ENCODE measurements at regions of chr22 and their contacts with region 1.

Region 1: DNA sequence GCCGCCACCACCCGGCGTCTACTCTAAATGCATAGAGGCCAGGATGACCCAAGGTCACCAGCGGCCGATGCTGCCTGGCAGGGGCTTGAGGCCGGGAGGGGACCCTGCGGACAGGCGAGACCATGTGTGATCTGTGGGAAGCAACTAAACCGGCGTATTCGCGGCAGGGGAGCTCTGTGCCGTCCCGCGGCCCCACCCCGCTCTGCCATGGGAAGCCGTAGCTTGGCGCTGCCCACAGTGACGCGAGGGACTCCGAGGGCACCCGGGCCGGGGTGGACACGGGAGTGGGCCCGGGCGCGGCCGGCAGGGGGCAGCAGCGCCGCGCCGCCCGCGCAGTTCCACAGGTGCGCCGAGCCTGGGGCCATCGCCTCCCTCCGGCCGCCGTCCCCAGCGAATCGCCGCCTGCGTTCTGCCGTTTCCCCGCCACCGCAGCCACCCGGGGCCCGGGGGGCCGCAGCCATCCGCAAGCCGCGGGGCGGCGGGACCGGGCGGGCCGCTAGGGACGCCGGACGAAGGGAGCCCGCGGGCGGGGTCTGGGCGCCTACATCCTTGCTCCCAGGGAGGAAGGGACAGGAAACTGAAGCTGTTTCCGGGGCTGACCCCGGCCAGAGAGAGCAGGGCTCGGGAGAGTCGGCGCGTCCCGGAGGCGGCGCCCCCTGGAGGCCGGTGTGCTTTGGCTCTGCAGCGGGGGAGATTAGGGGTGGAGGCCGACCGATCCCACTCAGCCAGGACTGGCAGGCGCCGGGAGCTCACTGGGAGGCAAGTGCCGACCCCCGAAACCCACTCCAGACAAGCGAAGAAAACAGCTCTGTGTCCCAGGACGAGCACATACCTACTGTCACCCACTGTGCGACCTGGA is 12.5 kb upstream of the HDHD5 start:
- DNase-seq: peak; percentile 89
- H3K4me3 ChIP-seq: peak overlapping the region; percentile 13 to 53 (median 46)
- H3K27ac ChIP-seq: peak overlapping the region; percentile 84
- H3K4me1 ChIP-seq: peaks cover 2% of the 10 kb centered on the region
- H3K27me3 ChIP-seq: no peaks in the 10 kb centered on the region
- CTCF ChIP-seq: peak; percentile 68 to 95
- POLR2A ChIP-seq: no peak

Region 2: DNA sequence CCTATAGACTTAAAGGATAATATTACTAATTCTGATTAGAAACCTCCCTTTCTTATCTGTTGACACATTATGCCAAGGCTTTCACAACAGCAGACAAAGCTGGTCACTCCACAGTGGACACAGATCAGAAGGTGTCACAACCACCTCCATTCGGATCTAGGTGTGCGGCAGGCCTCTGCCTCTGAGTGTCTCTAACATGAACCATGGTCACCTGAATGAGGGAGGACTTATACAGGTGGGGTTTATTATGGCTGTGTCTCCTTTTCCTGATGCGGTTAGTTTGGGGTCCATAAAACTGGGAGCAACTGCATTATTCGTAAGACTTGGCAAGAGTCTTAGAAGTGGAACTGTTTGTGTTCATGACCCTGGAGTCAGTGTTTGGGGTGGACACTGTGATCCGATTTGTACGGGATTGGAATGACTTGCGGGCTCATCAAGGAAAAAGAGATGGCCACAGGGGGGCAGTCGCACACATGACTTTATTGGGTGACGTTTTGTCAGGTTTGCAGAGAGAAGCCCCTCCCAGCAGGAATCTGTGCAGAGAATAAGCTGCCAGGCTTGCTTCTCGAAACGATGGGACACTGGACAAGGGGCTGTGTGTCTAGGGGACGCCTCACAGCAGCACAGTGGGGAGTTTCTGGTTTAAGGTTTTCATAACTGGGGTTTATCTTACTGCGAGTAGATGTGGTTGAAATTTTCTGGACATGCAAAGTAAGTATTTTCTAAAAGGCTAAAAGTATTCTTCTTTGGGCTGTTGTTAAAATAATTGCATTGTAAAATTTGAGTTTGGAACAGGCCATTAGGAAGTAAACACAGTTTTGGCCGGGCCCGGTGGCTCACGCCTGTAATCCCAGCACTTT is 254.2 kb before region 1 on chr22:
- CTCF ChIA-PET with region 1: interaction called, 4 read pairs
- POLR2A ChIA-PET with region 1: no interaction called
- dilution Hi-C with region 1: no loop called
- intact Hi-C with region 1: loop called (anchors 1 kb)
- DNase-seq: peak; percentile 70
- H3K4me3 ChIP-seq: no peak overlapping the region
- H3K27ac ChIP-seq: no peak overlapping the region
- H3K4me1 ChIP-seq: no peaks in the 10 kb centered on the region
- H3K27me3 ChIP-seq: peaks cover 0 to 2% of the 10 kb centered on the region in 2 experiments
- CTCF ChIP-seq: peak; percentile 59 to 64
- POLR2A ChIP-seq: no peak

Region 3: DNA sequence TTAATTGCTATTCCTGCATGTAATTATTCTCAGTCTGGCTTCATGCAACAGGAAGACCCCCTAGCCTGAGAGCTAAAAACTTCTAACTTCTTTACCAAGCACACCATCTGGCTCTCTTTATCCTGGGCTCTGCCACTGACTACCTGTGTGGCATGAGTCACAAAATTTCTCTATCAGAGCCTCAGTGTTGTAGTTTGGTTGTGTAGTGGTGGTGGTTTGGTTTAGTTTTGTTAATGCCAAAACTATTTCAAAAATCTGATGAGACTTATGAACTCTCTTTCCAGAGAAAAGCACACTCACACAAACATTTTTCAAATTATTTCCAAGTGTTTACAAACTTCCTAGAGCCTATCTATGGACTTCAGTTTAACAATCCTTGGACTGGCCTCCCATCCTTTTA is 94.3 kb before region 1 on chr22:
- CTCF ChIA-PET with region 1: interaction called, 103 read pairs
- POLR2A ChIA-PET with region 1: no interaction called
- dilution Hi-C with region 1: no loop called
- intact Hi-C with region 1: loop called (anchors 1 kb)
- DNase-seq: no peak
- H3K4me3 ChIP-seq: no peak overlapping the region
- H3K27ac ChIP-seq: no peak overlapping the region
- H3K4me1 ChIP-seq: peaks cover 3% of the 10 kb centered on the region
- H3K27me3 ChIP-seq: no peaks in the 10 kb centered on the region
- CTCF ChIP-seq: no peak
- POLR2A ChIP-seq: no peak

Region 4: GRCh38 chr22:17121227-17122195 is 50.0 kb before region 1 on chr22 and contains the start of gene TMEM121B:
- CTCF ChIA-PET with region 1: interaction called, 10 read pairs
- POLR2A ChIA-PET with region 1: no interaction called
- dilution Hi-C with region 1: no loop called
- intact Hi-C with region 1: loop called (anchors 1 kb)
- DNase-seq: peak; percentile 23
- H3K4me3 ChIP-seq: peak within 1 kb of the TSS; percentile 16 to 36 (median 33)
- H3K27ac ChIP-seq: no peak within 1 kb of the TSS
- H3K4me1 ChIP-seq: peaks cover 6% of the 10 kb centered on the region
- H3K27me3 ChIP-seq: peaks cover 22 to 25% of the 10 kb centered on the region in 2 experiments
- CTCF ChIP-seq: no peak
- POLR2A ChIP-seq: no peak
- total RNA-seq, gene TMEM121B: 0.33 and 0.37 TPM in 2 replicates

Region 5: DNA sequence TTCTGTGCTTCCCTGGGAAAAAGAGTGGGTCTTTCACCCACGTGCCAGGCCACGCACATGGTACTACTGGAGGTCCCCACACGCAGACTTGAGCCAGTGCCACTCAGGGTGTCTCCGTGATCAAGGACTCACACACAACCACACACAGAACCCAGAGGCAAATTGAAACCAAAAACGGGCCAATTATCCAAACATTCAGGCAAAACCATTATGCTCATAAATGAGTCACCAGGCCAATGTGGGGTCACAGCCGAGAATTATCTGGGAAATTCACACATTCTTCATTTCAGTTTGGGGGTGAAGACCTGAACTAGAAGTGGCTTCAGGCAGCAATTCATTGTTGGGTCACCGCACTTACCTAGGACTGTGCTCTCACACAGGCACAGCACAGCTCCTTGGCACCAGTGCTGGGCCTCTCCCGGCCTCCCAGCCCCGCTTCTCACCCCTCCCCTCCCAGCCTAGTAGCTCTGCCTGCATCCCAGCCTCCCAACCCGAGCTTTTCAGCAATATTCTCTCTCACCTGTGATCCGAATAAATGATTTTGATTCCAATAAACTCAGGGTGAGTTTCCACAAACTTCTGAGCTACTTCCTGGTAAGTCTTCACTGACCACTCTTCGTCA is 19.7 kb after region 1 on chr22:
- CTCF ChIA-PET with region 1: interaction called, 48 read pairs
- POLR2A ChIA-PET with region 1: no interaction called
- dilution Hi-C with region 1: no loop called
- intact Hi-C with region 1: no loop called
- DNase-seq: no peak
- H3K4me3 ChIP-seq: no peak overlapping the region
- H3K27ac ChIP-seq: no peak overlapping the region
- H3K4me1 ChIP-seq: no peaks in the 10 kb centered on the region
- H3K27me3 ChIP-seq: no peaks in the 10 kb centered on the region
- CTCF ChIP-seq: no peak
- POLR2A ChIP-seq: no peak

Region 6: DNA sequence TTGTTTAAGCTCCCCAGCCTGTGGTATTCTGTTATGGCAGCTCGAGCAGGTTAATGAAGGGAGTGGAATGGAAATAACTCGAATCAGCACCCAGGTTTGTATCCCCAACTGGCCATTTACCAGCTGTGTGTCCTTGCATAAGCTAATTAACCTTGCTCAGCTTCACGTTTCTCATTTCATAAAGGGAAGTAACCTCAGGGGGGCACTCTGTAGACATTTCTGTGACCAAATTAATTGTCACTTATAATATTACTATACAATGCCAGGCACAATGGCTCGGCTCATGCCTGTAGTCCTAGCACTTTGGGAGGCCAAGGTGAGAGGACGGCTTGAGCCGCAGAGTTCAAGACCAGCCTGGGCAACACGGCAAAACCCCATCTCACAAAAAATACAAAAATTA is 33.9 kb after region 1 on chr22:
- CTCF ChIA-PET with region 1: interaction called, 48 read pairs
- POLR2A ChIA-PET with region 1: interaction called, 3 read pairs
- dilution Hi-C with region 1: no loop called
- intact Hi-C with region 1: loop called (anchors 1 kb)
- DNase-seq: no peak
- H3K4me3 ChIP-seq: no peak overlapping the region
- H3K27ac ChIP-seq: no peak overlapping the region
- H3K4me1 ChIP-seq: no peaks in the 10 kb centered on the region
- H3K27me3 ChIP-seq: peaks cover 2 to 3% of the 10 kb centered on the region in 2 experiments
- CTCF ChIP-seq: no peak
- POLR2A ChIP-seq: no peak

Region 7: DNA sequence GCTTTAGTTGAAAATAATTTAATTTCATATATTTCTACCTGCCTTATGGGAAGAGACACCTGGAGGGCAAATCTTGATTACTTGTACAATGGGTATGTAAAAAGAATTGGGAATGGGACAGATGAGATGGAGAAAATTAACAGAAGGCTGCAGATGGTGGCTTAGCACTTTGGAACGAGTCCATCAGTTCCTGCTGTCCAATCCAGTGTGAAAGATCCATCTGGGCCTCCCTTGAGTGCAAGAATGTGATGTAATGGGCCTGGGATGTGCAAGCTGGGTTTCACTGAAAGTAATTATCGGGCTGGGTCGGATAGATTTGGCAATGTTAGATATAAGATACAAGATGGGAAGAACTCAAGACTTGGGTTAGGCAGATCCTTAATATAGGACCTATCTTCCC is 239.7 kb after region 1 on chr22:
- CTCF ChIA-PET with region 1: interaction called, 7 read pairs
- POLR2A ChIA-PET with region 1: interaction called, 4 read pairs
- dilution Hi-C with region 1: no loop called
- intact Hi-C with region 1: loop called (anchors 1 kb)
- DNase-seq: no peak
- H3K4me3 ChIP-seq: no peak overlapping the region
- H3K27ac ChIP-seq: no peak overlapping the region
- H3K4me1 ChIP-seq: peaks cover 16% of the 10 kb centered on the region
- H3K27me3 ChIP-seq: no peaks in the 10 kb centered on the region
- CTCF ChIP-seq: no peak
- POLR2A ChIP-seq: no peak